A549 (cell line): ENCODE measurements at regions of chr10 and their contacts with region 1.

Region 1: GRCh38 chr10:119428789-119429188 is 113.7 kb downstream of the RGS10 start:
- DNase-seq: no peak
- ATAC-seq: no peak
- H3K4me3 ChIP-seq: no peak overlapping the region
- H3K27ac ChIP-seq: no peak overlapping the region
- H3K4me1 ChIP-seq: no peaks in the 10 kb centered on the region
- CTCF ChIP-seq: no peak
- EP300 ChIP-seq: no peak
- POLR2A ChIP-seq: no peak
- RAD21 ChIP-seq: no peak

Region 2: DNA sequence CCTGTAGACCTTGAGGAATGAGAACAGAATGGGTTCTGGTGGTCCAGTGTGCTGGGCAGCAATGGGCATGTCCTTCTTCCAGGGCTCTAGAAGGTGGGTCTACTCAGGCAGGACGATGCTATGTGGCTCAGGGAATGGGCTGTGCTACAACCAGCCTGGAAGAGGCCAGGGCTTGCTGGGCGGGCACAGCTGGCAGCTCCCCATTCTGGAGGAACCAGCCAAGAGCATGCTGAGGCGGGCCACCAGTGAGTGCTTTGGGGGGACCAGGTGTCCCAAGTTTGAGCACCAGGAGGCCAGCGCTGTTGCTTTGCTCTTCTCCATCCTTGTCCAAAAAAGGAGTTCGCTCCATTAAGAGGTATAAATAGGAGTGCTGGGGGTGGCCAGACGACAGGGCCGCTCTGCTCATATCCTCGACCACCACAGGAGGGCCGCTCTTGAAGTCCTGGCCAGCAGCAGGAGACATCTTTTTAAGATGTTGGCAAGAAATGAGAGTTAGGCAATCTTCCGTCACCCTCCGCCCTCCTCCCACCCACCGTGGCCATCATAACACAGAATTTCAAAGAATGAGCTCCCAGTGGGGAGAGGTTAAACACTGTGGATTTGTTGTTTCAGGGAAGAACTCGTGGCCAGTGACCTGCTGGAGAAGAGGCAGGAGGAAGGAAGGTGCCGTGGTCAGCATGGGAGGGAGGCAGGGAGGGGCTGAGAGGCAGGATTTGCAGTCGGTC is 80.1 kb before region 1 on chr10:
- CTCF ChIA-PET with region 1: no interaction called
- POLR2A ChIA-PET with region 1: no interaction called
- DNase-seq: no peak
- ATAC-seq: 0 out of 6 replicates have a peak, but pooled peaks of 1 of the 2 experiments have one; percentile 32
- H3K4me3 ChIP-seq: no peak overlapping the region
- H3K27ac ChIP-seq: no peak overlapping the region
- H3K4me1 ChIP-seq: no peaks in the 10 kb centered on the region
- CTCF ChIP-seq: no peak
- EP300 ChIP-seq: no peak
- POLR2A ChIP-seq: no peak
- RAD21 ChIP-seq: no peak

Region 3: DNA sequence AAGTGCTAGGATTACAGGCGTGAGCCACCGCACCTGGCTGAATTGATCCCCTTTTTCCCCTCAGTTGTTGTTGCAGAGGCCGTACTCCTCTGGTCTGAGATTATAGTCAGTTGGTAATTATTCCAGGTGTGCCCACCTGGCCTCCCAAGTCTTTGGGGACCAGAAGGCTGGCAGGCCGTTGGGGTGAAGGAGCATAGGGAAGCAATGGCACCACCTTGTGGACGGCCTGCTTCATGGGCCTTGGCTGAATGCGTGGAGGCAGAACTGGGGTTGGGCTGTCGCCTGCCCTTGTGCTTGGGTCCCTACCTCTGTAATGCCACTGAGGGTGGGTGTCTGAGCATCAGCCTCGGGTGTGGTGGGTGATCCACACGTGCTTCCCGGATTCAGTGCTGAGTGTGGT is 11.9 kb before region 1 on chr10:
- CTCF ChIA-PET with region 1: interaction called, 17 read pairs
- POLR2A ChIA-PET with region 1: no interaction called
- DNase-seq: peak; percentile 62 to 90
- ATAC-seq: peak; percentile 81 to 93
- H3K4me3 ChIP-seq: no peak overlapping the region
- H3K27ac ChIP-seq: peak overlapping the region in 1 of 2 experiments; percentile 53; a peak in 1 of 6 replicates
- H3K4me1 ChIP-seq: no peaks in the 10 kb centered on the region
- CTCF ChIP-seq: peak; percentile 82
- EP300 ChIP-seq: no peak
- POLR2A ChIP-seq: no peak
- RAD21 ChIP-seq: peak; percentile 93 to 95